ENCODE measurements at regions of chr7 and their contacts with region 1.

Region 1: GRCh38 chr7:24979863-24980533 is at the start of gene OSBPL3:
- DNase-seq: peak; percentile 91 to 97 (median 95)
- ATAC-seq: peak; percentile 87
- H3K4me3 ChIP-seq: peak within 1 kb of the TSS; percentile 82 to 96
- H3K4me3 Mint-ChIP-seq: peak within 1 kb of the TSS; percentile 97
- H3K27ac ChIP-seq: peak within 1 kb of the TSS; percentile 59 to 85
- H3K27ac Mint-ChIP-seq: peak within 1 kb of the TSS; percentile 81
- H3K4me1 ChIP-seq: peaks cover 34% of the 10 kb centered on the region
- H3K4me1 Mint-ChIP-seq: peaks cover 54% of the 10 kb centered on the region
- H3K27me3 ChIP-seq: no peaks in the 10 kb centered on the region
- H3K27me3 Mint-ChIP-seq: no peaks in the 10 kb centered on the region
- CTCF ChIP-seq: peak; percentile 20
- total RNA-seq, gene OSBPL3: 12.0 to 13.8 TPM

Region 2: DNA sequence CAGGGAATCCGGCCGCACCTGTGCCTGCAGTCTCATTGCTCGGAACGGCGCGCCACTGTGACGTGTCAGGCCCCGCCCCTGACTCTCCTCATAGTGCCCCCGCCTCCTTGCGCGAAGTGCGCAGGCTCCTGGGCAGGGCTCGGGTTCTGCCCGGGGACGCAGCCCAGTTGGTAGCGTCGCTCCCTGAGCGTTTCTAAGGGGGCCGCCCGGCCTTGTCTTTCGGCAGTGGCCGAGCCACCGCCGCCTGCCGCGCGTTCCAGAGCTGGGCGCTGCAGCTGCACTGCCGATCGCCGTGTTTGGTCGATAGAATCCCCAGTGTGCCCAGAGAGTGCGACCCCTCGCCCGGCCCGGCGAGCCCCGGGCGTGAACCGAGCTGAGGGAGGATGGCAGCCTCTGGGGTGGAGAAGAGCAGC is 1874.3 kb before region 1 on chr7 and contains the start of gene KLHL7:
- CTCF ChIA-PET with region 1: no interaction called
- POLR2A ChIA-PET with region 1: no interaction called
- intact Hi-C with region 1: loop called in 1 of 2 experiments (anchors 10 kb)
- DNase-seq: peak; percentile 92 to 98 (median 96)
- ATAC-seq: peak; percentile 95
- H3K4me3 ChIP-seq: peak within 1 kb of the TSS; percentile 93 to 94
- H3K4me3 Mint-ChIP-seq: peak within 1 kb of the TSS; percentile 98
- H3K27ac ChIP-seq: peak within 1 kb of the TSS; percentile 97
- H3K27ac Mint-ChIP-seq: peak within 1 kb of the TSS; percentile 95
- H3K4me1 ChIP-seq: peaks cover 23% of the 10 kb centered on the region
- H3K4me1 Mint-ChIP-seq: peaks cover 49% of the 10 kb centered on the region
- H3K27me3 ChIP-seq: no peaks in the 10 kb centered on the region
- H3K27me3 Mint-ChIP-seq: no peaks in the 10 kb centered on the region
- CTCF ChIP-seq: no peak
- total RNA-seq, gene KLHL7: 19.2 to 20.2 TPM

Region 3: DNA sequence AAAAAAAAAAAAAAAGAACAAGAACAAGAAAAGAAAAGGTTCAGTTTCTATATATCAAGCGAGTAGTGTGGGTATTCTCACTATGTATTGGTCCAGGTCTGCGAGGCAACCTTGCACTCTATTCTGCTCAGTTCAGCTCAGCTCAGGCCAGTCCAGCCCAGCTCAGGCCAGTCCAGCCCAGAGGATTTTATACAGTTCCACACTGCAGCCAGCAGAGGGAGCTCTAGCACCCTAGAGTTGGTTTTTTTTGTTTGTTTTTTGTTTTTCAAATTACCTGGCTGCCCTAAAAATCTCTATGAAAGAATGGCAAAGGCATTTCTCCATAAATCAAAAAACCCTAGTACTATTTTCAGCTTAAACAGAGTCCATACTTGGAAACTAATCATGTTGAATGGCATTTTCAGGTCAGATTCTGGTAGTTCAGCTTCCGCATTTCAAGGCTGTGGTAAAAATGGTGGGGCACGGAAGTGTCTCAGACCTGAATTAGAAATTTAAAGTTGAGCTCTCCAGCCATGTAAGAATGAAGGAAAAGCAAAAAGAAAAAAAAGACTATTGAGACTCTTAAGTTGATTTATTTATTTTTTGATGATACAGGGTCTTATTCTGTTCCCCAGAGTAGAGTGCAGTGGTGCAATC is 167.6 kb before region 1 on chr7:
- CTCF ChIA-PET with region 1: interaction called, 18 read pairs
- POLR2A ChIA-PET with region 1: interaction called, 6 read pairs
- intact Hi-C with region 1: no loop called
- DNase-seq: peak in 7 of 9 experiments; percentile 33 to 67 (median 52)
- ATAC-seq: peak; percentile 66
- H3K4me3 ChIP-seq: no peak overlapping the region
- H3K4me3 Mint-ChIP-seq: no peak overlapping the region
- H3K27ac ChIP-seq: no peak overlapping the region
- H3K27ac Mint-ChIP-seq: no peak overlapping the region
- H3K4me1 ChIP-seq: no peaks in the 10 kb centered on the region
- H3K4me1 Mint-ChIP-seq: no peaks in the 10 kb centered on the region
- H3K27me3 ChIP-seq: no peaks in the 10 kb centered on the region
- H3K27me3 Mint-ChIP-seq: no peaks in the 10 kb centered on the region
- CTCF ChIP-seq: peak; percentile 90

Region 4: GRCh38 chr7:24911213-24911603 is 68.8 kb before region 1 on chr7:
- CTCF ChIA-PET with region 1: interaction called, 5 read pairs
- POLR2A ChIA-PET with region 1: interaction called, 16 read pairs
- intact Hi-C with region 1: loop called (anchors 1 to 5 kb)
- DNase-seq: peak in 4 of 9 experiments; percentile 32 to 75 (median 48)
- ATAC-seq: peak; percentile 65
- H3K4me3 ChIP-seq: no peak overlapping the region
- H3K4me3 Mint-ChIP-seq: peak overlapping the region; percentile 27
- H3K27ac ChIP-seq: peak overlapping the region in 1 of 2 experiments; percentile 70
- H3K27ac Mint-ChIP-seq: peak overlapping the region; percentile 76
- H3K4me1 ChIP-seq: peaks cover 68% of the 10 kb centered on the region
- H3K4me1 Mint-ChIP-seq: peaks cover 54% of the 10 kb centered on the region
- H3K27me3 ChIP-seq: no peaks in the 10 kb centered on the region
- H3K27me3 Mint-ChIP-seq: no peaks in the 10 kb centered on the region
- CTCF ChIP-seq: no peak

Region 5: DNA sequence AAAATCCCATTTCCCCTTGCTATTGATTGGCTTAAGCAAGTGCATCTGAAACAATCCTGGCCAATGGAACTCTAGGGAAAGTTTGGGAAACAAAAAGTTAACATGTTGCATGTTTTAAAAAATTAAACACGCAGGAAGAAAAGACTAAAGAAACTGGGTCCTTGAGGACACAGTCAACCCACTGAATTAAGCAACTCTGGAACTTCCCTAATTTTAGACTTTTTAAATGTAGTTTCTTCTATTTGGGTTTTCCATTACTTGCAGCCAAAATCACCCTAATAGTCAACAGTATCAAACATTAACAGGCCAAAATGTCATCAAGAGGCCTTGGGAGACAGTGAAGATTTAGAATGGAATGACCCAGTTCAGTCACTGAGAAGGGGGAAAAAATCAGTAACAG is 40.6 kb before region 1 on chr7:
- CTCF ChIA-PET with region 1: no interaction called
- POLR2A ChIA-PET with region 1: no interaction called
- intact Hi-C with region 1: no loop called
- DNase-seq: no peak
- ATAC-seq: no peak
- H3K4me3 ChIP-seq: no peak overlapping the region
- H3K4me3 Mint-ChIP-seq: no peak overlapping the region
- H3K27ac ChIP-seq: no peak overlapping the region
- H3K27ac Mint-ChIP-seq: no peak overlapping the region
- H3K4me1 ChIP-seq: no peaks in the 10 kb centered on the region
- H3K4me1 Mint-ChIP-seq: peaks cover 38% of the 10 kb centered on the region
- H3K27me3 ChIP-seq: no peaks in the 10 kb centered on the region
- H3K27me3 Mint-ChIP-seq: no peaks in the 10 kb centered on the region
- CTCF ChIP-seq: no peak

Region 6: DNA sequence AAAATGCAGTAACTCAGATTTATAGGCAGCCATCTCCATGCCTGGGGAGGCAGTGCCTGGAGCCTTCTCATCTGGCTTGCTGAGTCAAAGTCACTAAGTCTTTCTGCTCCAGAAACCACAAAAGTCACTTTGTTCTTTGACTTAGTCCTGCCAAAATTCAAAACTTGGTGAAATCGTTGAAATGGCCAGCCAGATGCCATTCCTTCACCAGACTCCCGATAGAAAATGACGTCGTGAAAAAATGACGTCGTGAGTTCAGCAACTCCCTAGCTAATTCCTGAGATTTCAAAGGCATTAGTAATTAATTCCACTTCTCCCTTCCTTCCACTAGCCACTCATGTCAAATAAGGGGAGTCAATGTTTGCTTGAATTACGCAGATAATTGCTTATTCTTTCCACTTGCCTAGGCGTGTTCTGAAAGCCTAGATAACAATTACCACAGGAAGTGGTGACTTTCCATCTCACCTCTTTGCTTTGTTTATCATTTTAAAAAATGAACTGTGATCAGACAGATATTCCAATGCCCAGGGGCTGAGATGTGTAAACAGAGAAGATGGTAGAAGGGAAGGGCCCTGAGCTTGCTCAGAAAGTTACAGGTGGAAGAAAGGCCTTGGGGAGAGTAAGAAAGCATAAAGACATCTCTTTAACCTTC is 48.5 kb after region 1 on chr7:
- CTCF ChIA-PET with region 1: interaction called, 4 read pairs
- POLR2A ChIA-PET with region 1: interaction called, 10 read pairs
- intact Hi-C with region 1: loop called in 1 of 2 experiments (anchors 1 kb)
- DNase-seq: peak in 4 of 9 experiments; percentile 21 to 64 (median 35)
- ATAC-seq: peak; percentile 79
- H3K4me3 ChIP-seq: no peak overlapping the region
- H3K4me3 Mint-ChIP-seq: peak overlapping the region; percentile 32
- H3K27ac ChIP-seq: peak overlapping the region; percentile 12 to 69
- H3K27ac Mint-ChIP-seq: peak overlapping the region; percentile 88
- H3K4me1 ChIP-seq: peaks cover 23% of the 10 kb centered on the region
- H3K4me1 Mint-ChIP-seq: peaks cover 29% of the 10 kb centered on the region
- H3K27me3 ChIP-seq: no peaks in the 10 kb centered on the region
- H3K27me3 Mint-ChIP-seq: no peaks in the 10 kb centered on the region
- CTCF ChIP-seq: no peak

Region 7: DNA sequence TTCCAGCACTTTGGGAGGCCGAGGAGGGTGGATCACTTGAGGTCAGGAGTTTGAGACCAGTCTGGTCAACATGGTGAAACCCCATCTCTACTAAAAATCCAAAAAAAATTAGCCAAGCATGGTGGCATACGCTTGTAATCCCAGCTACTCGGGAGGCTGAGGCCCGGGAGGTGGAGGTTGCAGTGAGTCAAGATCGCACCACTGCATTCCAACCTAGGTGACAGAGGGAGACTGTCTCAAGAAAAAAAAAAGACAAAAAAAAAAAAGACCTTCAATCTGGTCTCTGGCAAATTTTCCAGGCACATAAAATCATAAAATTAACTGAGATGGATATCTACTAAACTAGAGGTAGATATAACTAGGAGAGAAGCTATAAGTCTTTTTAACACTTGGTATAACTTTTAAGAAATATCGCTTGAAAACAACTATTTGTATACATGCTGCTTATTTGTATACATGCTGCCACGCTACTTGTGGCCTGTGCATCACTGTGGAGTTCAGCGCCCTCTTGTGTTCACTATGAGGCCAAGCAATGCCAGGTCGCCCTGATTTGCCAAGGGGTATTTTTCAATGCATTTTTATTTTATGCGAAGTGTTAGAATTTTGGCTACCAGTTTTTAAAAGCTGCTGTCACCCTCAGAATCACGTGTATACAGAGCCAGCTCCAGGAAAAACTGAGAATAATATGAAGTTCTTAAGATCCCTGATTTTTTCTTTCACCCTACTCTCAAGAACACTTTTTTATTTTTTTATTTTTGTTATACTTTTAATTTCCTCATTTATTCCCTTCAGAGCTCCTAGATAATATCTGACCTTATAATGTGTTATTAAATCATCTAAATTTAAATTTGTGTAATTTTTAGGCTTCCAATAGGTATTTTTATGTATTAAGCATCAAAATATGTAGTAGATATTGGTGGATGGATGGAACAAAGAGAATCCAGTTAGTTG is 118.4 kb after region 1 on chr7:
- CTCF ChIA-PET with region 1: interaction called, 12 read pairs
- POLR2A ChIA-PET with region 1: interaction called, 3 read pairs
- intact Hi-C with region 1: no loop called
- DNase-seq: peak; percentile 20 to 81 (median 57)
- ATAC-seq: peak; percentile 85
- H3K4me3 ChIP-seq: no peak overlapping the region
- H3K4me3 Mint-ChIP-seq: no peak overlapping the region
- H3K27ac ChIP-seq: no peak overlapping the region
- H3K27ac Mint-ChIP-seq: no peak overlapping the region
- H3K4me1 ChIP-seq: peaks cover 3% of the 10 kb centered on the region
- H3K4me1 Mint-ChIP-seq: peaks cover 4% of the 10 kb centered on the region
- H3K27me3 ChIP-seq: no peaks in the 10 kb centered on the region
- H3K27me3 Mint-ChIP-seq: peaks cover 2% of the 10 kb centered on the region
- CTCF ChIP-seq: peak; percentile 85

Region 8: GRCh38 chr7:25179771-25180591 is 200.0 kb after region 1 on chr7:
- CTCF ChIA-PET with region 1: no interaction called
- POLR2A ChIA-PET with region 1: no interaction called
- intact Hi-C with region 1: loop called (anchors 1 to 5 kb)
- DNase-seq: peak; percentile 92 to 99 (median 95)
- ATAC-seq: peak; percentile 98
- H3K4me3 ChIP-seq: peak overlapping the region; percentile 64 to 70
- H3K4me3 Mint-ChIP-seq: peak overlapping the region; percentile 91
- H3K27ac ChIP-seq: peak overlapping the region; percentile 57 to 83
- H3K27ac Mint-ChIP-seq: peak overlapping the region; percentile 92
- H3K4me1 ChIP-seq: peaks cover 7% of the 10 kb centered on the region
- H3K4me1 Mint-ChIP-seq: peaks cover 22% of the 10 kb centered on the region
- H3K27me3 ChIP-seq: no peaks in the 10 kb centered on the region
- H3K27me3 Mint-ChIP-seq: peaks cover under 1% of the 10 kb centered on the region
- CTCF ChIP-seq: peak; percentile 91